HepG2 (cell line): ENCODE measurements at regions of chr10 and their contacts with region 1.

Region 1: DNA sequence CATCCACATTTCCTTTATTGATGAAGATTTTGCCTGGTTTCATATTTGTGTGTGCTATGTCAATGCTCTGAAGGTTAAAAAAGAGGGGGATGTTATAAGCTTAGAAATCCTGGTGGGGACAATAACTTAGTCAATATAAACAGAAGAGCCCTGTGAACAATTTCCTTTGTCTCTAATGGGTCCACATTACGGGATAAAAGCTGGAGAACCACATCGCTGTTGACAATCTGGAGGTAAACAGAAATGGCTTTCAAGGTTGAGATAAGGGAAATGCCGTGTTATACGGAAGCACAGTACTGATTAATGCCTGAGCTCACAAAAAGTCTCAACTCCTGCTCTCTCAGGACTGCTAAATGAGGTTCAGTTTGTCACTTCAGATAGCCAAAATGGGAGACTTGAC is 16.8 kb downstream of the ASAH2 start:
- DNase-seq: peak; percentile 91
- ATAC-seq: peak; percentile 98
- H3K4me3 ChIP-seq: peak overlapping the region in 1 of 3 experiments; percentile 21; a peak in 1 of 6 replicates
- H3K27ac ChIP-seq: peak overlapping the region; percentile 64
- H3K4me1 ChIP-seq: peaks cover 52% of the 10 kb centered on the region
- H3K27me3 ChIP-seq: no peaks in the 10 kb centered on the region
- CTCF ChIP-seq: no peak
- EP300 ChIP-seq: peak; percentile 42 to 97; a peak in 3 of 4 replicates
- POLR2A ChIP-seq: no peak
- RAD21 ChIP-seq: no peak

Region 2: GRCh38 chr10:50250096-50250854 is 15.8 kb after region 1 on chr10:
- CTCF ChIA-PET with region 1: no interaction called
- POLR2A ChIA-PET with region 1: interaction called, 3 read pairs
- in situ Hi-C with region 1: no loop called
- intact Hi-C with region 1: loop called (anchors 2 kb)
- DNase-seq: peak; percentile 63
- ATAC-seq: peak; percentile 92
- H3K4me3 ChIP-seq: peak overlapping the region in 2 of 3 experiments; percentile 23 to 28; a peak in 2 of 6 replicates
- H3K27ac ChIP-seq: peak overlapping the region; percentile 24
- H3K4me1 ChIP-seq: peaks cover 61% of the 10 kb centered on the region
- H3K27me3 ChIP-seq: no peaks in the 10 kb centered on the region
- CTCF ChIP-seq: no peak
- EP300 ChIP-seq: peak in 1 of 2 experiments; percentile 84; a peak in 2 of 4 replicates
- POLR2A ChIP-seq: no peak
- RAD21 ChIP-seq: no peak